ENCODE measurements at regions of chr3 and their contacts with region 1.

Region 1: GRCh38 chr3:123449102-123449996 is 459 bp upstream of the ADCY5 start:
- DNase-seq: no peak
- H3K4me3 ChIP-seq: peak overlapping the region; percentile 76 to 93 (median 86)
- H3K27ac ChIP-seq: peak overlapping the region; percentile 94 to 98 (median 96)
- H3K4me1 ChIP-seq: peaks cover 0 to 43% (median 17%) of the 10 kb centered on the region in 4 donors
- H3K27me3 ChIP-seq: peaks cover 0 to 4% (median 0%) of the 10 kb centered on the region in 3 donors
- CTCF ChIP-seq: no peak
- EP300 ChIP-seq: no peak
- POLR2A ChIP-seq: no peak

Region 2: DNA sequence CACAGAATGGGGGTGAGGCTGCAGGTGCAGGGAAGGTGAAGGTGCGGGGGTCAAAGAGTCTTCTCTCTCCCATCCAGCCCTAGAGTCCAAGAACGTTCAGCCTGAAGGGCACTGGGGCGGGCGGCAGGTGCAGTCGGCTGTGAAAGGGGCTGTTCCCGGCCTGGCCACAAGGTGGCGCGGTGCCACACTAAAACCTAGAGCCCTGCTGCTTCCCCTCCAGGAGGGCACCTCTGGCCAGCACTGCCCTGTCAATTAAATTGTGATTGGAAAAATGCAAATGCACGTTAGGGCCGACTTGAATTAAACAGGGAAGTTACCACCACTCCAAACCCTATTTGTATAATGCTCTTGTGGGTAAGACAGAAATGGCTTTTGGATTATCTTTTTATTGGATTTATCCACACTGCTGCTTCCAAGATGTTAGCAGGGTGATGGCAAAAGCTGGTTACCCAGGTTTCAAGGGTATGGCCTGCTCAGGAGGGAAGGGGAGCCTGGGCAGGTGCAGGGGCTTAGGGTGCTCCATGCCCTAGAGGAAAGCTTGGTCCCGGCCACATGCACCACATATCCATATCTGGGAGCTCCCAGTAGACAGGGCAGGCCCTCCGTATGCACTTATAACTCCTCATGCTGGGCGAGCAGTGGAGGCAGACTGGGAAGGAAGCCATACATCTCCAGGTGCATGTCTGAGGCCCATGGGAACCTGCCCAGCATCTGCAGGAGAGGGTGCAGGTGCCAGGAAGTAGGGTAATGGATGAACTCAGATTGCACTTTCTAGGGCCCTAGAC is 120.3 kb before region 1 on chr3:
- intact Hi-C with region 1: loop called (anchors 1 kb)
- DNase-seq: peak; percentile 90
- H3K4me3 ChIP-seq: no peak overlapping the region
- H3K27ac ChIP-seq: peak overlapping the region; percentile 76 to 87 (median 83)
- H3K4me1 ChIP-seq: peaks cover 0 to 59% (median 55%) of the 10 kb centered on the region in 4 donors
- H3K27me3 ChIP-seq: no peaks in the 10 kb centered on the region
- CTCF ChIP-seq: peak; percentile 92 to 97 (median 96)
- EP300 ChIP-seq: no peak
- POLR2A ChIP-seq: no peak

Region 3: DNA sequence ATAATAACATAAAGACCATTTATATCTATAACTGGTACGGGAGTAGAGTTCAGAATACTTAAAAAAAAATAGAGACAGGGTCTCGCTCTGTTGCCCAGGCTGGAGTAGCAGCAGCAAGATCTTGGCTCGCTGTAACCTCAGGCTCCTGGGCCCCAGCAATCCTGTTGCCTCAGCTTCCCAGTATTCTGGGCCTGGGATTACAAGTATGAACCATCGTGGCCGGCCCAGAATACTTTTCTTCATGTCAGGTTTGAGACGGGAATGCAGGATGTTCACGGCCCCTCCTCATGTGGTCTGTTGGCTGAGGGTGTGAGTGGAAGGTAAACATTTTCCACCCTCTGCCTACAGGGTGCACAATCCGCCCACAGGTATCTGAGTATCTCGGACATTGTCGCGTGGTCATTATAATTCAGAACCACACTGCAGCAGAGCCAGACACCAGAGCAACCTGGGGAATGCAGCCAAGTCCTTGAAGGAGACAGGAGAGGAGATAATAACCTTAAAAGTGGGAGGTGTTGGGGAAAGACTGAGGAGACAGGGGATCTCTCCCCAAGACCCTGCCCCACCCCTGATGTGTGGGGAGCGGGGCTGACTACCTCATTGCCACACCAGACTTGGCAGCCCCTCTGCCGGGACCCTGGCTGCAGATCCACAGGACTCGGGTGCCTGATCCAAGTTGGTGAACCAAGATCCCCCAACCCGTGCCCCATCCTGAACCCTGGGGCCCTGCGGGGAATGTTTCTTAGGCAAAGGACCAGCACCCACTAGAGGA is 107.3 kb before region 1 on chr3:
- intact Hi-C with region 1: loop called (anchors 2 kb)
- DNase-seq: peak; percentile 69
- H3K4me3 ChIP-seq: no peak overlapping the region
- H3K27ac ChIP-seq: peak overlapping the region; percentile 62 to 74 (median 66)
- H3K4me1 ChIP-seq: peaks cover 0 to 61% (median 58%) of the 10 kb centered on the region in 4 donors
- H3K27me3 ChIP-seq: no peaks in the 10 kb centered on the region
- CTCF ChIP-seq: peak in 2 of 4 experiments; percentile 9 to 18
- EP300 ChIP-seq: no peak
- POLR2A ChIP-seq: no peak

Region 4: GRCh38 chr3:123373474-123373987 is 75.8 kb before region 1 on chr3:
- intact Hi-C with region 1: loop called (anchors 2 kb)
- DNase-seq: peak; percentile 94
- H3K4me3 ChIP-seq: no peak overlapping the region
- H3K27ac ChIP-seq: peak overlapping the region; percentile 68 to 91 (median 82)
- H3K4me1 ChIP-seq: peaks cover 0 to 92% (median 84%) of the 10 kb centered on the region in 4 donors
- H3K27me3 ChIP-seq: no peaks in the 10 kb centered on the region
- CTCF ChIP-seq: no peak
- EP300 ChIP-seq: peak in 3 of 4 donors; percentile 50 to 55 (median 54)
- POLR2A ChIP-seq: no peak

Region 5: GRCh38 chr3:123415453-123415775 is 33.9 kb before region 1 on chr3:
- intact Hi-C with region 1: loop called (anchors 1 kb)
- DNase-seq: no peak
- H3K4me3 ChIP-seq: peak overlapping the region in 1 of 4 donors; percentile 2
- H3K27ac ChIP-seq: peak overlapping the region; percentile 87 to 93 (median 91)
- H3K4me1 ChIP-seq: peaks cover 0 to 100% (median 93%) of the 10 kb centered on the region in 4 donors
- H3K27me3 ChIP-seq: no peaks in the 10 kb centered on the region
- CTCF ChIP-seq: peak in 1 of 4 experiments; percentile 23
- EP300 ChIP-seq: no peak
- POLR2A ChIP-seq: no peak

Region 6: GRCh38 chr3:123489400-123490004 is 40.2 kb after region 1 on chr3:
- intact Hi-C with region 1: loop called (anchors 5 kb)
- DNase-seq: peak; percentile 85
- H3K4me3 ChIP-seq: no peak overlapping the region
- H3K27ac ChIP-seq: peak overlapping the region; percentile 28 to 67 (median 64)
- H3K4me1 ChIP-seq: peaks cover 0 to 13% (median 9%) of the 10 kb centered on the region in 4 donors
- H3K27me3 ChIP-seq: no peaks in the 10 kb centered on the region
- CTCF ChIP-seq: peak; percentile 84 to 87 (median 86)
- EP300 ChIP-seq: no peak
- POLR2A ChIP-seq: no peak

Region 7: DNA sequence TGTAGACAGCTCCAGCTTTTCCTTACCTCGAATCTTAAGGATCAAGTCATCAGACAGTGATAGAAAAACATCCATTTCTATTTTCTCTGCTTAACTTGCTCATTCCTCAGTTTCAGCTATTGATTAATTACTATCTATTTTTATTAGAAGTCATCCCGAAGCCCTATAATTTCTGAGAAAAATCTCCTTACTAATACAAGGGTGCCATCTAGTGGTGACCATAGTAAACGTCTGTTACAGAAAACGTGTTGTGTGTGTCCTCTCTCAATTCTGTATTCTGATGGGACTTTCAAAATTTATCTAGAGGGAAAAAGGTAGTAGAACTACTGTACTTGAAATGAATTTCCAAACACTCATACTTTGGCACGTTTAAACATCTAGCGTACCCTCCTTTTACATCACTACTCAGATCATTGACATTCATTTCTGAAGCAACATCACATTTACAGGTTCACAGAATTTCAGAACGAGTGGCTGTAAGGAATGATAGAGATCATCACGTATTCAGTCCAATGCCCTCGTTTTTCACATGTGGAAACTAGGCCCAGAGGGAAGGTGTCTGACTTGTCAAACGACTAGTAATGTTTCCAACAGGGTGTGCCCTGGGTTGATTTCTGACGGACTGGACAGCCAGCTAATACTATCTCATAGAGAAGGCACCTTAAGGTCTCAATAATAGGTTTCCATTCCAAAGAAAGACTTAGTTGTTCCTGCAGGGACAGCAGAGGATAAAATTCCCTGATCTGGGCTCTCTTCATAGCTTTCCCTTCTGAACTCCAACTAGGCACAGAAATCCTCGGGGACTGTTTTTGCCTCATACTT is 109.9 kb after region 1 on chr3:
- intact Hi-C with region 1: loop called (anchors 5 kb)
- DNase-seq: no peak
- H3K4me3 ChIP-seq: no peak overlapping the region
- H3K27ac ChIP-seq: no peak overlapping the region
- H3K4me1 ChIP-seq: peaks cover 0 to 4% (median 2%) of the 10 kb centered on the region in 4 donors
- H3K27me3 ChIP-seq: no peaks in the 10 kb centered on the region
- CTCF ChIP-seq: peak; percentile 48 to 85 (median 64)
- EP300 ChIP-seq: no peak
- POLR2A ChIP-seq: no peak